ENCODE measurements at regions of chr19 and their contacts with region 1.

Region 1: DNA sequence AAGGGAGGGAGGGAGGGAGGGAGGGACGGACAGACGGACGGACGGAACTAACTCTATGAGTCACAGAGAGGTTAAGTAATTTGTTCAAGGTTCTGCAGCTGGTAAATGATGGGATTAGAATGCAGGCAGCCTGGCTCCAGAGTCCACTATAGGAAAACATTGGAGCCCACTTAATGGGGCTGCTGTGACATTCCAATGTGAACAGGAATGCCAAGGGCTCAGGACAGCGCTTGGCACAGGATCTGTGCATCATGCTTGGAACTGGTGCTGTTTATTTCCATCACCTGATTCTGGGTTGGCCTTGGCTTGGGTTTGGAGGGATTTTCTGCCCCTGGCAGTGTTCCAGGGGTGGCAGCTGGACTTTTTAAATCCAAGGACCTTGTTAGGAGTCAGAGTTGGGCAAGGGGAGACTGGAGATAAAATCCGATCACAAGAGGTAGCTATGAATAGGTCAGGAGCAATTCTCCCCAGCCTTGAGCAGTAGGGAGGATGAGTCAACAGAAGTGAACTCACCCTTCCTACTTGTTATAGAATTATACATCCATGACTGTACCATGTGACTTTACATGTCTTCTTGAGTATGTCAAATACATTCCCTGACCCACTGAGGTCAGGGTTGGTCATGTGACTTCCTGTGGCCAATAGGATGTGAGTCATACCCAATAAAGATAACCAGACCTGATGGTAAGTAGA is 7.8 kb upstream of the HIF3A start:
- DNase-seq: peak; percentile 68
- H3K4me3 ChIP-seq: no peak overlapping the region
- H3K27ac ChIP-seq: no peak overlapping the region
- H3K4me1 ChIP-seq: no peaks in the 10 kb centered on the region
- H3K27me3 ChIP-seq: no peaks in the 10 kb centered on the region
- CTCF ChIP-seq: no peak

Region 2: GRCh38 chr19:45692187-45693105 is 596.6 kb before region 1 on chr19 and contains the start of gene QPCTL:
- CTCF ChIA-PET with region 1: no interaction called
- POLR2A ChIA-PET with region 1: no interaction called
- intact Hi-C with region 1: no loop called
- DNase-seq: peak; percentile 100
- H3K4me3 ChIP-seq: peak within 1 kb of the TSS; percentile 63
- H3K27ac ChIP-seq: peak within 1 kb of the TSS; percentile 88
- H3K4me1 ChIP-seq: peaks cover 9% of the 10 kb centered on the region
- H3K27me3 ChIP-seq: no peaks in the 10 kb centered on the region
- CTCF ChIP-seq: no peak
- total RNA-seq, gene QPCTL: 12.8 and 17.4 TPM in 2 replicates

Region 3: DNA sequence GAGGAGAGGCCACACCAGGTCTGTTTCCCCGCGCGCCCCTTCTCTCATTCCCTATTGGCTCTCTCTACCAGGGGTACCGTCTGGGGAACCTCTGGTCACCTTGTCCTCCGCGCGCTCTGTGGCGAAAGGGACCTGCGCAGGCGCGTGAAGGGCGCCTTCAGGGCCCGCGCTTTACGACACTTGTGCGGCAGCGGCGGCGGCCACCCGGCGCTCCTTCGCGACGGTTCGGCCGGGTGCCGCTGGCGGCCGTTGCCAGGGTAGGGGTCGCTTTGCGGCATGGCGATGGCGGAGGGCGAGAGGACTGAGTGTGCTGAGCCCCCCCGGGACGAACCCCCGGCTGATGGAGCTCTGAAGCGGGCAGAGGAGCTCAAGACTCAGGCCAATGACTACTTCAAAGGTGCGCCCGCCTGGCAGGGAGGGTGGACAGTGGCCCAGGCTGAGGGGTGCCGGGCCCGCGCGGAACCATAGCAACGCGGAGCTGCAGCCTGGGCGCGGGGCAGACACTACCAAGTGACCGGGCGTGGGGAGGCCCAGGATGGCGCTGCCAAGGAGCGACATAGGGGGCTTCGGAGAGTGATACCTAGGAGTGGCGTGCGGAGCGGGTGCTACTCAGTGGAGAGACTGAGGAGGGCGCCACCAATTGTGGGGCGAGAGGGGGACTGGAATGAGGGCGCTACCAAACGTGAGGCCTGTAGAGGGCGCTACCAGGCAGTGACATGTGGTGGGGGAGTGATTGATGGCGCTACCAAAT is 58.0 kb after region 1 on chr19 and contains the start of gene PPP5C:
- CTCF ChIA-PET with region 1: interaction called, 13 read pairs
- POLR2A ChIA-PET with region 1: no interaction called
- intact Hi-C with region 1: no loop called
- DNase-seq: peak; percentile 98
- H3K4me3 ChIP-seq: peak within 1 kb of the TSS; percentile 95
- H3K27ac ChIP-seq: peak within 1 kb of the TSS; percentile 92
- H3K4me1 ChIP-seq: peaks cover 20% of the 10 kb centered on the region
- H3K27me3 ChIP-seq: no peaks in the 10 kb centered on the region
- CTCF ChIP-seq: peak; percentile 99
- total RNA-seq, gene PPP5C: 157 and 164 TPM in 2 replicates

Measured in A673 (cell line).